ENCODE measurements at regions of chr17 and their contacts with region 1.

Region 1: GRCh38 chr17:27353461-27354050 is 59.6 kb downstream of the WSB1 start:
- DNase-seq: peak; percentile 97
- H3K4me3 ChIP-seq: peak overlapping the region in 1 of 3 experiments; percentile 20
- H3K27ac ChIP-seq: peak overlapping the region; percentile 99
- H3K4me1 ChIP-seq: peaks cover 40% of the 10 kb centered on the region
- H3K27me3 ChIP-seq: no peaks in the 10 kb centered on the region
- CTCF ChIP-seq: peak; percentile 61 to 99
- POLR2A ChIP-seq: peak; percentile 47

Region 2: GRCh38 chr17:27332485-27333409 is 20.8 kb before region 1 on chr17:
- CTCF ChIA-PET with region 1: interaction called, 17 read pairs
- POLR2A ChIA-PET with region 1: no interaction called
- dilution Hi-C with region 1: no loop called
- intact Hi-C with region 1: loop called (anchors 1 kb)
- DNase-seq: peak; percentile 98
- H3K4me3 ChIP-seq: peak overlapping the region; percentile 3 to 65 (median 17)
- H3K27ac ChIP-seq: peak overlapping the region; percentile 78
- H3K4me1 ChIP-seq: peaks cover 16% of the 10 kb centered on the region
- H3K27me3 ChIP-seq: no peaks in the 10 kb centered on the region
- CTCF ChIP-seq: peak; percentile 91 to 97
- POLR2A ChIP-seq: peak; percentile 39

Region 3: DNA sequence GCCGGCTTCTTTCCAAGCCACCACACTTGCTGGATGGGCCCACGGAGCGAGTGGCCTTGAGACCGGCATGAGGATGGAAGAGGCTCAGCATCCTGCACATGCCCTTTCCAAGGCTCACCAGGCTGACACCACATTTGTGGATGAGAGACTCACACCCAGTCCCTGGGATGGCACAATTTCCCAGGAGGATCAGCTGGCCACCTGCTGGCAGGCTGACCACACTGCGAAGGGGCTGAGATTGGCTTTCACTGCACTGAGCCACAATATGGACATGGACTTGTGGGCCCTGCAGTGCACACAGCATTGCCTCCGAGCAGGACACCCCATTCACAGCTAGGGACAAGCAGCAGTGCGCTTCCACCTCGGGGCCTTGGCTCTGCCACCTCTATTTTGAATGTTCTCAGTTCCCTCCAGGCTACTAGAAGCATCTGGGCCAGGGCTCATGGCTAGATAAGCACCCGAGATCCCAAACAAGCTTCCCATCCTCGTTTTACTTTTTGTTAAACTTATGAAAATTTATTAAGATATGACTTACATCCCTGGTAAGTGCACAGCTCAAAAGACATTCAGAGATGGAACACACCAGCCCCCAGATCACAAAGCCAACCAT is 77.4 kb after region 1 on chr17:
- CTCF ChIA-PET with region 1: interaction called, 18 read pairs
- POLR2A ChIA-PET with region 1: no interaction called
- dilution Hi-C with region 1: no loop called
- intact Hi-C with region 1: loop called (anchors 1 kb)
- DNase-seq: peak; percentile 74
- H3K4me3 ChIP-seq: no peak overlapping the region
- H3K27ac ChIP-seq: no peak overlapping the region
- H3K4me1 ChIP-seq: no peaks in the 10 kb centered on the region
- H3K27me3 ChIP-seq: no peaks in the 10 kb centered on the region
- CTCF ChIP-seq: peak; percentile 82 to 93
- POLR2A ChIP-seq: no peak

Region 4: DNA sequence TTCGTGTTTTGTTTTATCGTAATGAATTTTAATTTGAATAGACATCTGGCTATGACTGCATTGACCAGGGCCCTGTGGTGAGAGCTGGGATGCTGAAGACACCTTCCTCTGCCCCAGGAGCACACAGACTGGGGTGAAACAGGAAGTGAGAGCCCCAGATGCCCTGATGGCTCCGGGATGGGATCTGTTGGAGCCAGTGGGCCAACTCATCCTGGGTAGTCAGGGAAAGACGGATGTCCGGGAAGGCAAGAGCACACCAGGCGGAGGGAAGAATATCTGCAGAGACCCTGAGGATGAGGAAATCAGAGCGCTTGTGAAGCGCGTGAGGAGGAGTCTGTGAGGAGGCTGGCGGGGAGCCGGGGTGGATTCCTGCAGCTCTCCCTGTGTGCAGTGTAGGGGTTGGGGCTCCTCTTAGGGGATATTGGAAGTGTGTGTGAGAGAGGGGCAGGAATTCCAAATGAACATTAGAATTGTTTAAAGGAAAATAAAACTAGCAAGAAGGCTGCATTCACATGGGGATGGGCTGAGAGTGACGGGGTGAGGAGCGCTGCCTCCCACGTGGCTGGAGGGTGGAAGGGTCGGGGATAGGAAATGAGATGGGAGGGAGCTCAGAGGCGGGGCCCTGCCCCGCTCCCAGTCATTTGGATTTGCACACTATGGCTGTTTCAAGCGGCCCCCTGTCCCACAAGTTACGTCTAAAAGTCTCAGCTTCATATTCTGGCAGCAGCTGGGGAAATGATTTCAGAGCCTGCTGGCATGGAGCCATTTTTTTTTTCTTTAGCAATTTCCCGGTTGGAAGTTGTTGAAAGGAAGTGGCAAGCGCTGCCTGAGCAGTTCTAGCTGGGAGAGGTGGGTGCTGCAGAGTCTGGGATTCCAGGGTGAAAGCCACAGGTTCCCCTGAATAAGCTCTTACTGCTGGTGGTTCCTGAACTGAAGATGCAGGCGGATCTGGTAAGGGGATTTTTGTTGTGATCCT is 206.2 kb after region 1 on chr17:
- CTCF ChIA-PET with region 1: interaction called, 11 read pairs
- POLR2A ChIA-PET with region 1: no interaction called
- dilution Hi-C with region 1: no loop called
- intact Hi-C with region 1: loop called (anchors 1 kb)
- DNase-seq: peak; percentile 96
- H3K4me3 ChIP-seq: peak overlapping the region in 2 of 3 experiments; percentile 3 to 49
- H3K27ac ChIP-seq: peak overlapping the region; percentile 86
- H3K4me1 ChIP-seq: peaks cover 59% of the 10 kb centered on the region
- H3K27me3 ChIP-seq: no peaks in the 10 kb centered on the region
- CTCF ChIP-seq: peak; percentile 12 to 21
- POLR2A ChIP-seq: peak; percentile 68

Measured in endothelial cell of umbilical vein (primary cell).